ENCODE measurements at regions of chr5 and their contacts with region 1.

Region 1: GRCh38 chr5:140346348-140347101 is at the start of gene HBEGF:
- DNase-seq: peak; percentile 74
- ATAC-seq: peak; percentile 82
- H3K4me3 ChIP-seq: peak within 1 kb of the TSS; percentile 66 to 76
- H3K27ac ChIP-seq: peak within 1 kb of the TSS; percentile 68
- H3K4me1 ChIP-seq: peaks cover 22 to 43% of the 10 kb centered on the region in 2 experiments
- H3K27me3 ChIP-seq: no peaks in the 10 kb centered on the region
- CTCF ChIP-seq: peak in 2 of 3 experiments; percentile 51 to 67; a peak in 4 of 6 replicates
- POLR2A ChIP-seq: peak; percentile 82
- RAD21 ChIP-seq: no peak
- total RNA-seq, gene HBEGF: 12.3 TPM

Region 2: GRCh38 chr5:140244525-140245025 is 102.0 kb before region 1 on chr5:
- CTCF ChIA-PET with region 1: interaction called, 76 read pairs
- POLR2A ChIA-PET with region 1: interaction called, 57 read pairs
- RAD21 ChIA-PET with region 1: interaction called, 13 to 20 read pairs
- intact Hi-C with region 1: loop called (anchors 1 kb)
- DNase-seq: no peak
- ATAC-seq: peak; percentile 63
- H3K4me3 ChIP-seq: no peak overlapping the region
- H3K27ac ChIP-seq: no peak overlapping the region
- H3K4me1 ChIP-seq: peaks cover 25 to 33% of the 10 kb centered on the region in 2 experiments
- H3K27me3 ChIP-seq: no peaks in the 10 kb centered on the region
- CTCF ChIP-seq: peak in 2 of 3 experiments; percentile 72 to 81; a peak in 4 of 6 replicates
- POLR2A ChIP-seq: no peak
- RAD21 ChIP-seq: no peak

Region 3: GRCh38 chr5:140261403-140262171 is 84.9 kb before region 1 on chr5:
- CTCF ChIA-PET with region 1: interaction called, 6 read pairs
- POLR2A ChIA-PET with region 1: interaction called, 24 read pairs
- RAD21 ChIA-PET with region 1: interaction called in 1 of 2 experiments, 5 read pairs
- intact Hi-C with region 1: no loop called
- DNase-seq: peak; percentile 79
- ATAC-seq: peak; percentile 96
- H3K4me3 ChIP-seq: peak overlapping the region in 1 of 2 experiments; percentile 16; a peak in 2 of 4 replicates
- H3K27ac ChIP-seq: peak overlapping the region; percentile 38; the same call in 1 of the 2 replicates
- H3K4me1 ChIP-seq: peaks cover 27 to 48% of the 10 kb centered on the region in 2 experiments
- H3K27me3 ChIP-seq: no peaks in the 10 kb centered on the region
- CTCF ChIP-seq: 0 out of 6 replicates have a peak, but pooled peaks of 2 of the 3 experiments have one; percentile 3 to 10
- POLR2A ChIP-seq: no peak
- RAD21 ChIP-seq: peak; percentile 32

Region 4: DNA sequence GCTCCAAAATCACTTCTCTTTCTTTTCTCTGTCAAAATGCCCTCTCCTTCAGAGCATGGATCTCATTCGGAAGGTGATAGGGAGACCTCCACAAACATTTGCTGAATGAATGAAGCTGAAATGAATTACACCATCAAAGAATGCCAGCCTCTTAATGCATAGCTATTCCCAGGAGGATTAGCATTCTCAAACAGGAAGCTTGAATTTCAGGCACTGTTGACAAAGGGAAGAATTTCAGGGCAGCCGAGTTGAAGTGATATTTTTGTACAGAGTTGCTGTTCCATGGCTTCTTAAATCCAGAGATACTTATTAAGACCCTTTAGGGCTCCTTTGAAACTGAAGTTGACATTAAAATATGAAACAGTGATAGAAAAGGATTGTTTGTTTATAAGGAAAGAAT is 18.9 kb before region 1 on chr5:
- CTCF ChIA-PET with region 1: interaction called, 5 read pairs
- POLR2A ChIA-PET with region 1: interaction called, 20 read pairs
- RAD21 ChIA-PET with region 1: no interaction called
- intact Hi-C with region 1: no loop called
- DNase-seq: no peak
- ATAC-seq: no peak
- H3K4me3 ChIP-seq: no peak overlapping the region
- H3K27ac ChIP-seq: no peak overlapping the region
- H3K4me1 ChIP-seq: peaks cover 12 to 23% of the 10 kb centered on the region in 2 experiments
- H3K27me3 ChIP-seq: no peaks in the 10 kb centered on the region
- CTCF ChIP-seq: no peak
- POLR2A ChIP-seq: no peak
- RAD21 ChIP-seq: no peak

Region 5: GRCh38 chr5:140357726-140358093 is 11.2 kb after region 1 on chr5:
- CTCF ChIA-PET with region 1: interaction called, 43 read pairs
- POLR2A ChIA-PET with region 1: interaction called, 19 read pairs
- RAD21 ChIA-PET with region 1: interaction called in 1 of 2 experiments, 4 read pairs
- intact Hi-C with region 1: no loop called
- DNase-seq: peak; percentile 76
- ATAC-seq: peak; percentile 94
- H3K4me3 ChIP-seq: peak overlapping the region; percentile 13 to 30; a peak in 3 of 4 replicates
- H3K27ac ChIP-seq: no peak overlapping the region
- H3K4me1 ChIP-seq: peaks cover 0 to 21% of the 10 kb centered on the region in 2 experiments; a peak in 2 of 4 replicates
- H3K27me3 ChIP-seq: no peaks in the 10 kb centered on the region
- CTCF ChIP-seq: peak in 2 of 3 experiments; percentile 91 to 92; a peak in 4 of 6 replicates
- POLR2A ChIP-seq: no peak
- RAD21 ChIP-seq: no peak

Region 6: GRCh38 chr5:140718241-140718580 is 371.7 kb after region 1 on chr5:
- CTCF ChIA-PET with region 1: interaction called, 12 read pairs
- POLR2A ChIA-PET with region 1: interaction called, 4 read pairs
- RAD21 ChIA-PET with region 1: no interaction called
- intact Hi-C with region 1: no loop called
- DNase-seq: no peak
- ATAC-seq: peak; percentile 4
- H3K4me3 ChIP-seq: peak overlapping the region in 1 of 2 experiments; percentile 42; a peak in 1 of 4 replicates
- H3K27ac ChIP-seq: peak overlapping the region; percentile 80
- H3K4me1 ChIP-seq: peaks cover 12 to 28% of the 10 kb centered on the region in 2 experiments
- H3K27me3 ChIP-seq: no peaks in the 10 kb centered on the region
- CTCF ChIP-seq: no peak
- POLR2A ChIP-seq: no peak
- RAD21 ChIP-seq: no peak

Region 7: DNA sequence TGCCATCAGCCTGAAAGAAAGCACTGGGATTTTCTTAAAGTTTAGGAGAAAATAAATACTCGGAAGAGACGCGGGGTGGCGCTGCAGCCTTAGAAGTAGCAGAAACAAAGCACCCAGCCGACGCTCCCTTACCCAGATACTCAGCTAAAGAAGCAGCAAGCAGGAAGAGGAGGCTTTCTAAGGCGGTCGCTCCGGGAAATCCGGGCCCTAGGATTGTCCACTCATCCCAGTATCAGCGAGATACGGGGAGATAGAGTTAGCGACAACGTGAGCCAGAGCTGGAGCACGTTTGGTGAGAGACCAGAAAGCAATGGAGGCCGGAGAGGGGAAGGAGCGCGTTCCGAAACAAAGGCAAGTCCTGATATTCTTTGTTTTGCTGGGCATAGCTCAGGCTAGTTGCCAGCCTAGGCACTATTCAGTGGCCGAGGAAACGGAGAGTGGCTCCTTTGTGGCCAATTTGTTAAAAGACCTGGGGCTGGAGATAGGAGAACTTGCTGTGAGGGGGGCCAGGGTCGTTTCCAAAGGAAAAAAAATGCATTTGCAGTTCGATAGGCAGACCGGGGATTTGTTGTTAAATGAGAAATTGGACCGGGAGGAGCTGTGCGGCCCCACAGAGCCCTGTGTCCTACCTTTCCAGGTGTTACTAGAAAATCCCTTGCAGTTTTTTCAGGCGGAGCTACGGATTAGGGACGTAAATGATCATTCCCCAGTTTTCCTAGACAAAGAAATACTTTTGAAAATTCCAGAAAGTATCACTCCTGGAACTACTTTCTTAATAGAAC is 748.1 kb after region 1 on chr5 and contains the start of gene PCDHB2:
- CTCF ChIA-PET with region 1: no interaction called
- POLR2A ChIA-PET with region 1: no interaction called
- RAD21 ChIA-PET with region 1: no interaction called
- intact Hi-C with region 1: no loop called
- DNase-seq: no peak
- ATAC-seq: no peak
- H3K4me3 ChIP-seq: no peak within 1 kb of the TSS
- H3K27ac ChIP-seq: no peak within 1 kb of the TSS
- H3K4me1 ChIP-seq: no peaks in the 10 kb centered on the region
- H3K27me3 ChIP-seq: no peaks in the 10 kb centered on the region
- CTCF ChIP-seq: no peak
- POLR2A ChIP-seq: no peak
- RAD21 ChIP-seq: no peak
- total RNA-seq, gene PCDHB2: not detected

Measured in HCT116 (cell line).